Common myeloid progenitor, CD34-positive (primary cell): ENCODE measurements at regions of chr15 and their contacts with region 1.

Region 1: GRCh38 chr15:66611257-66612053 is 45.7 kb upstream of the LCTL start:
- DNase-seq: no peak
- H3K4me3 ChIP-seq: no peak overlapping the region
- H3K27ac ChIP-seq: no peak overlapping the region
- H3K4me1 ChIP-seq: peaks cover 18 to 52% (median 38%) of the 10 kb centered on the region in 4 experiments
- H3K27me3 ChIP-seq: no peaks in the 10 kb centered on the region

Region 2: GRCh38 chr15:66630801-66631351 is 19.4 kb after region 1 on chr15:
- CTCF ChIA-PET with region 1: interaction called, 10 read pairs
- POLR2A ChIA-PET with region 1: interaction called, 5 read pairs
- DNase-seq: peak; percentile 33 to 79 (median 60)
- H3K4me3 ChIP-seq: no peak overlapping the region
- H3K27ac ChIP-seq: peak overlapping the region in 1 of 2 experiments; percentile 8
- H3K4me1 ChIP-seq: peaks cover 0 to 74% (median 26%) of the 10 kb centered on the region in 4 experiments
- H3K27me3 ChIP-seq: no peaks in the 10 kb centered on the region